ENCODE measurements at regions of chr10 and their contacts with region 1.

Region 1: DNA sequence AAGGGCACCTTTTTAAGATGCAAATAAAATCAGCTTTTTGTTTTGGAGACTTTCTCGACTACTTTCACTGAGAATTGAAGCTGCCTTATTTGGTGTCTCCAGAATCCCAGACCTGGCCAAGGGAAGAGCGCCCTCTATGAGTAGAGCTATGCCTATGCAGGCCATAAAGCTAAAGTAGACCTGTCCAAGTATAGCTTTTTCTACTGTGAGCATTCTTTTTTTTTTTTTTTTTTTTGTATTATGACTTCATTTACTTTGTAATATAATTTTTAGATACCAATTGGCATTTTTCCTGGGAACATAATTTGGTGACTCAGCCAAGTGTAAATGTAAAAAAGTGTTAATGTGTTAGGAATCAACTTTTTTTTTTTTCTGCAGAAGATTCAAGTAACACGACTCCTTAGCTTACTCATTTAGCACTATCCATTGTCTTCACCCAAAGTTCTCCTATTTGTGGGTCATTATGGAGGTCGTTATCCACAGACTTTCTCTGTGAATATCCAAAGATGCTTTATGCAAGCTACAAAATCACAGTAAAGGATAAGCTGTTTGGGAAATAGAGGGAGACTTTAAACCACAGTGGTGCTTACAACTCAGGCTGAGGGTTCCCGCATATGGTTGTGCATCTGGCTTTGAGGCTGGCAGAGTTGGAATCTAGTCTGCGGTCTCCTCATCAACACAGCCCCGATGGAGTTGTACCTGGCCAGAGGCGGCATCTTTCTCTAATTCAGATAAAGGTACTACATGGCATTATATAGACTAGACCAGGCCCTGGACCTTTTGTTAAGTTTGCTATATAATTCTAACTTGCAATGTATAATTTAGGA is 1040.2 kb upstream of the SORCS1 start:
- DNase-seq: peak; percentile 22
- CTCF ChIP-seq: peak; percentile 74

Region 2: DNA sequence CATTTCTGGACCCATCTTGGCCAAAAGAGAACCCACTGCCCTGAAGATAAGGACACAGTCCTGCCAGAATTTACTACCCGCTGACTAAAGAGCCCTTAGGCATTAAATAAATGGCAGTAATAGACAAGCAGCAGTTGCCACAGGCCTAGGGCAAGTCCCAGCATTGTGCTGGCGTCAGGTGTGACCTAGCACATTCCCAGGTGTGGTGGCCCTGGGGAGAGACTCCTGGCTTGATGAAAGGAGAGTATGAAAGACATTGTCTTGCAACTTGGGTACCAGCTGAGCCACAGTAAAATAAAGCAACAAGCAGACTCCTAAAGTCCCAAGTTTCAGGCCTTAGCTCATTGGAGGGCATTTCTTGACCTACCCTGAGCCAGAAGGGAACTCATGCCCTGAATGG is 324.5 kb before region 1 on chr10:
- CTCF ChIA-PET with region 1: no interaction called
- POLR2A ChIA-PET with region 1: no interaction called
- DNase-seq: no peak
- CTCF ChIP-seq: no peak

Region 3: DNA sequence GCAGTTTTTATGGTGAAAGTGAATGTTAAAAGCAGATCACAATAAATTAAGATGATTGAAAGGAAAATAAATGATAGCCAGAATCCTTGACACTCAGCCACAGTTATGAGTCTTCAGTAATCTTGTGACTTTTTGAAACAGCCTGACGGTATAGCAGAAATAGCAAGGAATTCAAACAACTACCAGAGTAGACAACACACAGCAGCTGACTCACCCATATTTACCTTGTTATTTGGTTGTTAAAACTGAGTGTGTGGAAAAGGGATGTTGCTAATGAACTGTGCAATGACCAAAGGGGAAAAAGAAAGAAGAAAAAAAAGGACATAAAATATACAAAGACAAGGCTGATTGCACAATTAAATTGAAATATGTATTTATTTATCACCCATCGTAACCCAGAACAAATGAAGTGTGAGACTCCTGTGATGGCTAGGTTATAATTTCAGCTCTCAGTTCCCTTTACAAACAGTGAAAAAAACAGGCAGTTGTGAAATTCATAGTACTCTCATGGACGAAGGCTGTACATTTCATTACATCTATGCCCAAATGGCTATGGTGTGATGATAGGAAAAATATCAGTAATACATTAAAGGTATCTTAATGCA is 17.2 kb before region 1 on chr10:
- CTCF ChIA-PET with region 1: interaction called, 25 read pairs
- POLR2A ChIA-PET with region 1: no interaction called
- DNase-seq: no peak
- CTCF ChIP-seq: no peak

Region 4: DNA sequence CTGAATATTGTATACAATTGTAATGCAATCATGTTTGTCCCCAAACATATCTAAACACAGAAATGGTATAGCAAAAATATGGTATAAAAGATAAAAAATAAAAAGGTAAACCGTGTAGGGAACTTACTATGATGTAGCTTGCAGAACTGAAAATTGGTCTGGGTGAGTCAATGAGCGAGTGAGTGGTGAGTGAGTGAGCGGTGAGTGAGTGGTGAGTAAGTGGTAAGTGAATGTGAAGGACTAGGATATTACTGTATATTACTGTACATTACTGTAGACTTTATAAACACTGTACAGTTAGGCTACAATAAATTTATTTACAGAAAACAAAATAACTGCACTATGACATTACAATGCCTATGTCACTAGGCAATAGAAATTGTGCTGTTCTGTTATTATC is 123.0 kb after region 1 on chr10:
- CTCF ChIA-PET with region 1: no interaction called
- POLR2A ChIA-PET with region 1: no interaction called
- DNase-seq: no peak
- CTCF ChIP-seq: no peak

Measured in GM10248 (cell line).